ENCODE measurements at regions of chr11 and their contacts with region 1.

Region 1: DNA sequence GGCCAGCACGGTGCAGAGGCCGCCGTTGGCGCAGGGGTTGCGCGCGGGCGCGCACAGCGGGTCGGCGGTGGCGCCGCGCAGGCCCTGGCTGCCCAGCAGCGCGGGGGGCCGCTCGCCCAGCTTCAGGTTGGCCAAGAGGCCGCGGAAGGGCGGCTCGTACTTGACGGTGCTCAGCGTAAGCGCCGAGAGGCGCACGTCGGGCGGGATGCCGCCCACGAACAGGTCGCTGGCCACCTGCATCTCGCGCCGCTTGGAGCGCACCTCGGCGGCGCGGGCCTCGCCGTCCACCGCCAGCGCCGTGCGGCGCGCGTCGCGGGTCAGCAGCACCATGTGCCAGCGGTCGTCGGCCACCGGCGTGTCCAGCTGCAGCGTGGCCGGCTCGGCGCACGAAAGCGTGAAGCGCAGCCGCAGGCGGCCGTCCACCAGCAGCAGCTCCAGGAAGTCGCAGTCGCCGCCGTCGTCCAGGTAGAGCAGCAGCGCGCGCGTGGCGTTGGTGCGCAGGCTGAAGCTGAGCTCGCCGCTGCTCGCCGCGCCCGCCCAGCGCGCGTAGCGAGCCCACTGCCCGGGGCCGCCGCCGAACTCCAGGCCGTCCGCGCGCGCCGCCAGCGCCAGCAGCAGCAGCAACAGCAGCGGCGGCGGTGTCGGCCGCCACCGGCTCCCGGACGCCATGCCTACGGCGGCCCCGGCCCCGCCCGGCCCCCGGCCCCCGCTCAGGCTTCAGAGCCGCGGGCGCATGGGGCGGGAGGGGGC is 9.8 kb downstream of the NRXN2 start:
- DNase-seq: no peak
- H3K4me3 ChIP-seq: no peak overlapping the region
- CTCF ChIP-seq: no peak

Region 2: GRCh38 chr11:64750361-64751054 is 37.3 kb after region 1 on chr11:
- in situ Hi-C with region 1: loop called (anchors 5 kb)
- DNase-seq: no peak
- H3K4me3 ChIP-seq: no peak overlapping the region
- CTCF ChIP-seq: peak; percentile 17

Region 3: DNA sequence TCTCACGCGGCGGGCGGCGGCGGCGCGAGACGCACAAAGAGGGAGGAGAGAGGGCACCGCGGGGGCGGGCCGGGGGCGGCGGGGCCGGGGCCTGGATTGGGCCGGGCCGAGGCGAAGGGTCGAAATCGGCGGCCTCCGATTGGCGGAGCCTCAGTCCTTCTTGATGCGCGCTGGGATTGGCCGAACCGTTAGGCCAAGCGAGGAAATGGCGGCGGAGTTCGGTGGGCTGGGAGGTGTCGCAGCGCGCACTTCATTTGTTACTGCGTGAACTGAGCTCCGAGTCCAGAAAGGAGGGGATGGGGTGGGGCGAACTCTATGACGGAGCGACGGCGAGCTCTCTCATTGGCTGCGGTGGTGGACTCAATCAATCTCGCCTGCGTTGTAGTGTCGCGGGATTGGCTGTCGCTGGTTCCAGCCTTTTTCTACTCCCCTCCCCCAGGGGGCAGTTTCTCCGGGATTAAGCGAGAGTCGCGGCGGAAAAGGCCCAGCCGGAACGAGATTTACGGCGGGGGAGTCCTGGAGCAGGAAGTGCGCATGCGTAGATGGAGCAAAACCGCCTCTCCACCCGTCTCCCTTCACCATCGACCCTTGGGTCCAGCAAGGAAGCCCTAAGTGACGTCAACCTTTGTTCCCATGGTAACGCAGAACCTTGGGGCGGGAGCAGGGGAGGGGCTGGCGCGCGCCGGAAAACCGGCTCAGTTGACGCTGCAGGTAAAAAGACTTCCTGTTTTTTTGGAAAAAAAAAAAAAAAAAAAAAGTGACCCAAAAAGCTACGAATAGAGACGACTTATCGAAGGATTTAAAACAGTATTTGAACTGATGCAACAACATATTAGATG is 65.5 kb after region 1 on chr11 and contains the start of gene SF1:
- in situ Hi-C with region 1: loop called (anchors 10 kb)
- DNase-seq: peak; percentile 100
- H3K4me3 ChIP-seq: peak within 1 kb of the TSS; percentile 64
- CTCF ChIP-seq: no peak